Activated CD4-positive, alpha-beta T cell treated with anti-CD3 and anti-CD28 coated beads for 36 hours (primary cell): ENCODE measurements at regions of chr11 and their contacts with region 1.

Region 1: DNA sequence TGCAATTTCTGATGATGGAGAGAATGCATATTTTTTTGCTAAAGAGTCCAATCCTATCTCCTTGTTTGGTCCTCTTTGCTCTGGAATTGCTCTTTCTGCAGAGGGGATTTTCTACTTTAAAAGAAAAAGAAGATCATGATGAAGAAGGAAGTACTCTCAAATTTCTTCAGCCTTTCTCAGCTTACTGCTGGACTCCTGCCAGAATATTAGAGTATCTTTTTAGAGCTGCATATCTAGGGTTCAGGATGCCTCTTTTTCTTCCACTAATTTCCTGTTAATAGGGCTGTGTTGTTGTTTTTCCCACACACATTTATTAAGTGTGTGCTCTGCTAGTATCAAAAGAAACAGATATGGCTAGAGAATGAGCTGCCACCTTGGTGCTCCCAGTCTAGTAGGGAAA is 18.2 kb downstream of the UBASH3B start:
- DNase-seq: no peak
- ATAC-seq: no peak
- H3K4me3 Mint-ChIP-seq: no peak overlapping the region
- H3K27ac Mint-ChIP-seq: no peak overlapping the region
- H3K4me1 Mint-ChIP-seq: peaks cover 73% of the 10 kb centered on the region
- H3K27me3 Mint-ChIP-seq: no peaks in the 10 kb centered on the region

Region 2: GRCh38 chr11:122727101-122727929 is 53.6 kb after region 1 on chr11:
- CTCF ChIA-PET with region 1: no interaction called
- POLR2A ChIA-PET with region 1: no interaction called
- intact Hi-C with region 1: loop called (anchors 2 kb)
- DNase-seq: peak; percentile 63
- ATAC-seq: peak; percentile 68
- H3K4me3 Mint-ChIP-seq: peak overlapping the region; percentile 55
- H3K27ac Mint-ChIP-seq: peak overlapping the region; percentile 76
- H3K4me1 Mint-ChIP-seq: peaks cover 66% of the 10 kb centered on the region
- H3K27me3 Mint-ChIP-seq: no peaks in the 10 kb centered on the region

Region 3: DNA sequence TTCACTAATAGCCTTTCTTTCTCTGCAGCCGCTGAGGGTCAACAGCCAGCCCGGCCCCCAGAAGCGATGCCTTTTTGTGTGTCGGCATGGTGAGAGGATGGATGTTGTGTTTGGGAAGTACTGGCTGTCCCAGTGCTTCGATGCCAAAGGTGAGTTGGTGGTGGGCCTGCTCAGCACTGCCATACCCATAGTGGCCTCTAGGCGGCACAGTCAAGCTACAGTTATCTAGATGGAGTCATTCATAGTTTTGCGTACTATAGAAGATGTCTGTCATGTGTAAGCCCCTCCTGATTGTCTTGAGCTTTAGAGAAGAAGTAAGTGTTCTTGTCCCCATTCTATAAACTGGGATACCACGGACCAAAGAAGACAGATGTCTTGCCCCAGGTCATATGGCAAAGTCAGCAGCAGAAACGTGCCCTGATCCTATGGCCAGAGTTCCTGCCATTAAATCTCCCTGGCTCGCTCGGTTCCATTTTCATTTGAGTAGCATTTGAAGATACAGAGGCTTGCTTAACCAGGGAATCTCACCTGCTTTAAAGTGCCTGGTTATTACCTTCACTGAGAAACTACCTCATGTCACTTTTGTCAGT is 122.5 kb after region 1 on chr11:
- CTCF ChIA-PET with region 1: no interaction called
- POLR2A ChIA-PET with region 1: no interaction called
- intact Hi-C with region 1: no loop called
- DNase-seq: peak; percentile 84
- ATAC-seq: peak; percentile 91
- H3K4me3 Mint-ChIP-seq: no peak overlapping the region
- H3K27ac Mint-ChIP-seq: no peak overlapping the region
- H3K4me1 Mint-ChIP-seq: peaks cover 2% of the 10 kb centered on the region
- H3K27me3 Mint-ChIP-seq: no peaks in the 10 kb centered on the region

Region 4: DNA sequence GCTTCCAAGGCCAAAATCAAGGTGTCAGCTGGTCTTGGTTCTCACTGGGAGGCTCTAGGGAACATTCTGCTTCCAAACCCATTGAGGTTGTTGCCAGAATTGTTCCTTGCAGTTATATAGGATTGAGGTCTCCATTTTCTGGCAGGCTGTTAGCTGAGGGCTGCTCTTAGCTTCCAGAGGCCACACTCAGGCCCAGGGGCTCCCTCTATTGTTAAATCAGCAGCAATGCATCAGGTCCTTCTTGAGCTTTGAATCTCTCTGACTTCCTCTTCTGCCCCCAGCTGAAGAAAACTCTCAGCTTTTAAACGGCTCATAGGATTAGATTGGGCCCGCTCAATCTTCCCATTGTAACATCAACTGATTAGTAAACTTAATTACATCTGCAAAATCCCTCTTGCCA is 347.3 kb after region 1 on chr11:
- CTCF ChIA-PET with region 1: no interaction called
- POLR2A ChIA-PET with region 1: no interaction called
- intact Hi-C with region 1: no loop called
- DNase-seq: peak; percentile 58
- ATAC-seq: peak; percentile 91
- H3K4me3 Mint-ChIP-seq: no peak overlapping the region
- H3K27ac Mint-ChIP-seq: no peak overlapping the region
- H3K4me1 Mint-ChIP-seq: peaks cover 2% of the 10 kb centered on the region
- H3K27me3 Mint-ChIP-seq: peaks cover 2% of the 10 kb centered on the region